Activated naive CD8-positive, alpha-beta T cell treated with anti-CD3 and anti-CD28 coated beads, Interleukin-2, amount 10 ng/mL, durations not matched to agents 7 days and 5 days (primary cell): ENCODE measurements at regions of chr14 and their contacts with region 1.

Region 1: GRCh38 chr14:50085570-50086320 is 30.6 kb downstream of the VCPKMT start:
- DNase-seq: no peak
- ATAC-seq: no peak
- H3K4me3 Mint-ChIP-seq: peak overlapping the region; percentile 69
- H3K27ac Mint-ChIP-seq: peak overlapping the region; percentile 94
- H3K4me1 Mint-ChIP-seq: peaks cover 76% of the 10 kb centered on the region
- H3K27me3 Mint-ChIP-seq: no peaks in the 10 kb centered on the region

Region 2: DNA sequence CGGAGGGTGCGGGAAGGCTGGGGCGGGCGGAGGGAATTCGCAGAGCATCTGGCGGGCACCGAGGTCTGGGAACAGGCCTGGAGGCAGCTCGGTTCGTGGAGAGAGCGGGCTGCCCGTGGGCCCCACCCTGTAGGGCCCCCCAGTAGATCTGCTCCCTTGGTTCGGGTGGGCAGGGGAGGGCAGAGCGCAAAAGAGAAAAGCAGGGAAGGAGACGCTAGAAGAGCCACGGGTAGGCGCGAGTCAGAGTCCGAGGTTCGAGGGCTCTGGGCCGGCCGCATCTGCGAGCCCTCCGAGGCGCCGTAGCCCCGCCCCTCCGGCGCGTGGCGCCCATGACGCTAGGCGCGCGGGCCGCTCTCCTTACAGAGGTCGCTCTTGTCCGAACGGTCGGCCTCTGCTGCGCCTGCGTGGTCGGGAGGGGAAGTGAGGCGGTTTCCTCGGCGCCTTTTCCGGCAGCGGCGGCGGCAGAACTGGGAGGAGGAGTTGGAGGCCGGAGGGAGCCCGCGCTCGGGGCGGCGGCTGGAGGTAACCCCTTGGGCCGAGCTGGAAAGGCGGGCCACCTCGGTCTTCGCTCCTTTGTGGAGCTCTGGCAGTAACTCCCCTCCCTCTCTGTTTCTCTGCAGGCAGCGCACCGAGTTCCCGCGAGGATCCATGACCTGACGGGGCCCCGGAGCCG is 193.0 kb before region 1 on chr14 and contains the start of gene ARF6:
- POLR2A ChIA-PET with region 1: interaction called, 31 read pairs
- DNase-seq: peak; percentile 98
- ATAC-seq: peak; percentile 89
- H3K4me3 Mint-ChIP-seq: peak within 1 kb of the TSS; percentile 99
- H3K27ac Mint-ChIP-seq: peak within 1 kb of the TSS; percentile 99
- H3K4me1 Mint-ChIP-seq: peaks cover 16% of the 10 kb centered on the region
- H3K27me3 Mint-ChIP-seq: no peaks in the 10 kb centered on the region
- total RNA-seq, gene ARF6: 162 to 169 TPM

Region 3: GRCh38 chr14:50038398-50039119 is 47.2 kb before region 1 on chr14:
- POLR2A ChIA-PET with region 1: interaction called, 28 read pairs
- DNase-seq: no peak
- ATAC-seq: peak; percentile 40
- H3K4me3 Mint-ChIP-seq: peak overlapping the region; percentile 54
- H3K27ac Mint-ChIP-seq: peak overlapping the region; percentile 98
- H3K4me1 Mint-ChIP-seq: peaks cover 53% of the 10 kb centered on the region
- H3K27me3 Mint-ChIP-seq: no peaks in the 10 kb centered on the region

Region 4: DNA sequence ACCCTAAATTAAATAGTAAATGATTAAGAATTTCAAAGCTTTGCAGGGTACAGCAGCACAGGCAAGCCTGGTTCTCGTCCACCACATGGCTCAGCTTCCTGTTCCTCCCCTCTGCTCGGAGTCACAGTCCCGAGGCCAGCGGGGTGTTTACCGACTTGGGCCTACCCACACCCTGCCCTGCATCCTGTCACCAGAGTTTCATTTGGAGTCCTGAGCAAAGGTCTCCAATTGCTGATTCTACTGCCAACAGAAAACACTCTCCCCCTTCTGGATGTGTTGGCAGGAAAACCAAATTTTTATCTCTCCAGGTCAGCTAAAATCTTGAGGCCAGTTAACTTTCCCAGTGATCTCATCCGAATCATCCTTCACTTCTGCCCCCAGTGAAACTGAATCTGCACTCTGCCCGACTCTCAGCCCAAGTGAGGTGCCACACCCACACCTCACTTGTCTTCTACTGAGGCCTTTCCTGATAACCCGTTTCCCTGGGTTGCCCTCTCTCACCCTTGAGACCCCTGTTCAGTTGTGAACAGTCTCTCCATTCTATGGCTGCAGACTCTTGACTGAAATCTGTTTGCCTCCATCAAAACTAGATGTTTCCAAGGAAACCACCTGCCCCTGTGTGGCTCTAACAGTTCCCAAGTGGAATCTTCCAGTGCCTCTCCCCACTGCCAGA is 40.6 kb before region 1 on chr14:
- POLR2A ChIA-PET with region 1: interaction called, 28 read pairs
- DNase-seq: peak; percentile 74
- ATAC-seq: peak; percentile 91
- H3K4me3 Mint-ChIP-seq: peak overlapping the region; percentile 54
- H3K27ac Mint-ChIP-seq: peak overlapping the region; percentile 93
- H3K4me1 Mint-ChIP-seq: peaks cover 58% of the 10 kb centered on the region
- H3K27me3 Mint-ChIP-seq: no peaks in the 10 kb centered on the region

Region 5: GRCh38 chr14:50067723-50068495 is 17.8 kb before region 1 on chr14:
- POLR2A ChIA-PET with region 1: interaction called, 178 read pairs
- DNase-seq: no peak
- ATAC-seq: no peak
- H3K4me3 Mint-ChIP-seq: no peak overlapping the region
- H3K27ac Mint-ChIP-seq: peak overlapping the region; percentile 62
- H3K4me1 Mint-ChIP-seq: peaks cover 54% of the 10 kb centered on the region
- H3K27me3 Mint-ChIP-seq: no peaks in the 10 kb centered on the region

Region 6: GRCh38 chr14:50099335-50099734 is 13.6 kb after region 1 on chr14:
- POLR2A ChIA-PET with region 1: interaction called, 49 read pairs
- DNase-seq: no peak
- ATAC-seq: peak; percentile 46
- H3K4me3 Mint-ChIP-seq: peak overlapping the region; percentile 33
- H3K27ac Mint-ChIP-seq: peak overlapping the region; percentile 70
- H3K4me1 Mint-ChIP-seq: peaks cover 56% of the 10 kb centered on the region
- H3K27me3 Mint-ChIP-seq: no peaks in the 10 kb centered on the region